Activated CD8-positive, alpha-beta T cell treated with anti-CD3 and anti-CD28 coated beads, Interleukin-2, amount 10 ng/mL, durations not matched to agents 7 days and 5 days (primary cell): ENCODE measurements at regions of chr14 and their contacts with region 1.

Region 1: GRCh38 chr14:22200977-22201605 is 387.9 kb downstream of the DAD1 start:
- DNase-seq: peak; percentile 21
- ATAC-seq: peak; percentile 67
- H3K4me3 Mint-ChIP-seq: no peak overlapping the region
- H3K27ac Mint-ChIP-seq: no peak overlapping the region
- H3K4me1 Mint-ChIP-seq: peaks cover 24% of the 10 kb centered on the region
- H3K27me3 Mint-ChIP-seq: no peaks in the 10 kb centered on the region

Region 2: GRCh38 chr14:22163051-22163450 is 38.0 kb before region 1 on chr14:
- CTCF ChIA-PET with region 1: interaction called, 11 read pairs
- POLR2A ChIA-PET with region 1: no interaction called
- DNase-seq: no peak
- ATAC-seq: peak; percentile 58
- H3K4me3 Mint-ChIP-seq: peak overlapping the region; percentile 77
- H3K27ac Mint-ChIP-seq: peak overlapping the region; percentile 90
- H3K4me1 Mint-ChIP-seq: peaks cover 31% of the 10 kb centered on the region
- H3K27me3 Mint-ChIP-seq: no peaks in the 10 kb centered on the region

Region 3: DNA sequence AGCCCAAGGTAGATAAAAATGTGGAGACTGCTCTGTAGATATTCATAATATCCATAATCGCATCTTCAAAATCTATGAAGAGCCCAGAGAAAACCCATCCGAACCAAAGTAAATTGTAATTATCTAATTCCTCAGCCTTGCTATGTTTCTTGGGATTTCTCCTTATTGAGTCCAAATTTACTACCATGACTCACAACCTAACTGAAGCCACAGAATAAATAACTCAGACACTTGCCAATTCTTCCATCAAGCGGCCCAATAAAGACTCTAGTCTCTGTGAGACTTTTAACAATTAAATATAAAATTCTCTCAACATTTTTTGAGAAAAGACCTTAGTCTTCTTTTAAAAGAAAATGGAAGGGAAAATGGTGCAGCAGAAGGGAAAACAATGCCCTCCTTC is 21.9 kb before region 1 on chr14:
- CTCF ChIA-PET with region 1: interaction called, 13 read pairs
- POLR2A ChIA-PET with region 1: interaction called, 3 read pairs
- DNase-seq: no peak
- ATAC-seq: no peak
- H3K4me3 Mint-ChIP-seq: no peak overlapping the region
- H3K27ac Mint-ChIP-seq: no peak overlapping the region
- H3K4me1 Mint-ChIP-seq: peaks cover 30% of the 10 kb centered on the region
- H3K27me3 Mint-ChIP-seq: no peaks in the 10 kb centered on the region

Region 4: DNA sequence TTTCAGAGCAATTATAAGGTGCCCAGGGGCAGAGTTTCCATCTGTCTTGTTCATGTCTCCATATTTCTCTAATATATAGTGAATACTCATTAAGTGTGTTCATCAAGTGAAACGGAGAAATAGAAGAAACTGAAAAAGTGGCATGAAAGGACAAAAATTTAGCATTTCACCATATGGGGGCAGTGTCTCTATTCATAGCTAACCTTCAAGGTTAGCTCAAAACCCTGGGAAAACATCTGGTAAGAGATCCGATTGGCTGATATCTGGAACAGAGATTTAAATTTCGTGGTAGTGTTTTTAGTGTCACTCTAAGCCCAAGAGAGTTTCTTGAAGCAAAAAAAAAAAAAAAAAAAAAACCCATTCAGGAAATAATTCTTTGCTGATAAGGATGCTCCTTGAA is 20.4 kb after region 1 on chr14:
- CTCF ChIA-PET with region 1: interaction called, 11 read pairs
- POLR2A ChIA-PET with region 1: no interaction called
- DNase-seq: no peak
- ATAC-seq: no peak
- H3K4me3 Mint-ChIP-seq: peak overlapping the region; percentile 58
- H3K27ac Mint-ChIP-seq: no peak overlapping the region
- H3K4me1 Mint-ChIP-seq: peaks cover 13% of the 10 kb centered on the region
- H3K27me3 Mint-ChIP-seq: no peaks in the 10 kb centered on the region

Region 5: DNA sequence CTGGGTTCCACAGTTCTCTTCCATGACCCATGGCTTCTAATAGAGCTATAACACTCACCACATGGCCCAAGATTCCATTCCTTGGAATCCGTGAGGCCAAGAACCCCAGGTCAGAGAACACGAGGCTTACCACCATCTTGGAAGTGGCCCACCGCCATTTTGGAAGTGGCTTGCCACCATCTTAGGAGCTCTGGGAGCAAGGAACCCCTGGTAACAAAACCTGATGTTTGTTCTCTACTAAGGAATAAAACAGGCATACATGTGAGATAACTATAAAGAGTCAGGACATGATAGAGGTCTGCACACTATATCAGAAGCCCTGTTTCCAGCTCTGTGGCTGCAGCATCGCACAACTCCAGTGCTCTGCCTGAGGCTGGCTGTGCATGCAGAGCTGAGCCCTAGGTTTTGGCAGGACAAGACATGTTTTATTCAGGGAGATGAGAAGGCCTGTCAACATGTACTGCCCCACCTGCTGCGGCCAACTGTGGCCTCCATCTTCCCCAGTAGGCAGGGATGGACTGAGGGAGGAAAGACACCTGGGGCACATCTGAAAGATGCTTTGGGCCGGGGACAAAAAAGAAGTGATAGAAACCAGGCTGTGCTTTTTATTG is 43.0 kb after region 1 on chr14:
- CTCF ChIA-PET with region 1: no interaction called
- POLR2A ChIA-PET with region 1: no interaction called
- DNase-seq: no peak
- ATAC-seq: no peak
- H3K4me3 Mint-ChIP-seq: no peak overlapping the region
- H3K27ac Mint-ChIP-seq: no peak overlapping the region
- H3K4me1 Mint-ChIP-seq: no peaks in the 10 kb centered on the region
- H3K27me3 Mint-ChIP-seq: no peaks in the 10 kb centered on the region